ENCODE measurements at regions of chr12 and their contacts with region 1.

Region 1: GRCh38 chr12:42023733-42024494 is 120.8 kb downstream of the GXYLT1 start:
- DNase-seq: peak; percentile 69 to 82
- H3K4me3 ChIP-seq: peak overlapping the region; percentile 46 to 54
- H3K27ac ChIP-seq: no peak overlapping the region
- H3K4me1 ChIP-seq: no peaks in the 10 kb centered on the region
- H3K27me3 ChIP-seq: no peaks in the 10 kb centered on the region
- CTCF ChIP-seq: peak; percentile 93 to 94

Region 2: DNA sequence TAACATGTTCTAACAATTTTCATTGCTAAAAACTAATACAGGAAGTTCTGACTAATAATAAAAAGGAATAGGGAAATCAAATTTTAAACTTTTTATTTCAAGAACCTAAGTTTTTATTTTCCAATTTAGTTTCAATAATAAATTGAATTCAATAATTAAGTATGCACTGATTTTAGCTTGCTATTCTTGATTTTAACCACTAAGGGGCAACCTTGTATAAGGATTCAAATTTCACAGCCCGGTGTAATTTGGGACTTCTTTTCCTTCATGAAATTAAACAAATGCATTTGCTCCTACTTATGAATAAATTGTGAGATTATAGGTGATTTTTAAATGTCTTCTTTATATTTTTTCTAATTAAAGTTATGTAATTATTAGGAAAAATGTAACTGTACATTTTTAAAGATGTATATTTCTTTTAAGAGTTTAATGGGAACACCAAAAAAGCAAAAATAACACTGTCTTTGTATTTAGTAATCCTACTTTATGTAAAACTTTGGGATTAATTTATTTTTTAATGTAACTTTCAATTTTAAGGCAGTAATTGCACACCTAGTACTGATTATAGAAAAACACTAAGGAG is 1077.2 kb before region 1 on chr12:
- intact Hi-C with region 1: loop called (anchors 5 kb)
- DNase-seq: no peak
- H3K4me3 ChIP-seq: no peak overlapping the region
- H3K27ac ChIP-seq: no peak overlapping the region
- H3K4me1 ChIP-seq: no peaks in the 10 kb centered on the region
- H3K27me3 ChIP-seq: no peaks in the 10 kb centered on the region
- CTCF ChIP-seq: peak; percentile 68 to 69

Region 3: DNA sequence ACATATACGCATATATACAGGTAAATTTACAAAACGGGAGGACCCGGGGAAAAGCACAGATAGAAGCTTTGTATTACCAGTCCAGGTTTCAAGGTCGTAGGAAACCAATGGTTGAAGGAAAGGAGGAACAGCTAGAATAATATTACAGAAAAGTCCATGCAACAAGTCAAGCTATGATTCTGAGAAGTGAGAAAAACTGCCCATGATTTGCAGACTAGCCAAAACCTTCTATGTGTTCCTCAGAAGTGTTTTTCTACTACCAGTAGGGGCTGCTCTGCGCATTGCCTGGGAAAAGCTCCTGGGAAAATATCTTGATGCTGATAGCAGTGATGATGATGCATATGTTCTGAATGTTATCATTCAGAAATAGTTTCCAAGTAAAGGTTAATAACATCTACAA is 833.6 kb before region 1 on chr12:
- intact Hi-C with region 1: loop called (anchors 10 kb)
- DNase-seq: no peak
- H3K4me3 ChIP-seq: peak overlapping the region; percentile 69 to 78
- H3K27ac ChIP-seq: peak overlapping the region; percentile 91 to 92
- H3K4me1 ChIP-seq: peaks cover 0 to 63% (median 9%) of the 10 kb centered on the region in 4 donors
- H3K27me3 ChIP-seq: no peaks in the 10 kb centered on the region
- CTCF ChIP-seq: peak; percentile 65 to 75

Region 4: GRCh38 chr12:41697161-41697560 is 326.8 kb before region 1 on chr12:
- intact Hi-C with region 1: loop called (anchors 10 kb)
- DNase-seq: no peak
- H3K4me3 ChIP-seq: no peak overlapping the region
- H3K27ac ChIP-seq: no peak overlapping the region
- H3K4me1 ChIP-seq: no peaks in the 10 kb centered on the region
- H3K27me3 ChIP-seq: no peaks in the 10 kb centered on the region
- CTCF ChIP-seq: no peak

Measured in tibial artery (tissue), 4 donors.